Mammary epithelial cell (primary cell): ENCODE measurements at regions of chr7 and their contacts with region 1.

Region 1: DNA sequence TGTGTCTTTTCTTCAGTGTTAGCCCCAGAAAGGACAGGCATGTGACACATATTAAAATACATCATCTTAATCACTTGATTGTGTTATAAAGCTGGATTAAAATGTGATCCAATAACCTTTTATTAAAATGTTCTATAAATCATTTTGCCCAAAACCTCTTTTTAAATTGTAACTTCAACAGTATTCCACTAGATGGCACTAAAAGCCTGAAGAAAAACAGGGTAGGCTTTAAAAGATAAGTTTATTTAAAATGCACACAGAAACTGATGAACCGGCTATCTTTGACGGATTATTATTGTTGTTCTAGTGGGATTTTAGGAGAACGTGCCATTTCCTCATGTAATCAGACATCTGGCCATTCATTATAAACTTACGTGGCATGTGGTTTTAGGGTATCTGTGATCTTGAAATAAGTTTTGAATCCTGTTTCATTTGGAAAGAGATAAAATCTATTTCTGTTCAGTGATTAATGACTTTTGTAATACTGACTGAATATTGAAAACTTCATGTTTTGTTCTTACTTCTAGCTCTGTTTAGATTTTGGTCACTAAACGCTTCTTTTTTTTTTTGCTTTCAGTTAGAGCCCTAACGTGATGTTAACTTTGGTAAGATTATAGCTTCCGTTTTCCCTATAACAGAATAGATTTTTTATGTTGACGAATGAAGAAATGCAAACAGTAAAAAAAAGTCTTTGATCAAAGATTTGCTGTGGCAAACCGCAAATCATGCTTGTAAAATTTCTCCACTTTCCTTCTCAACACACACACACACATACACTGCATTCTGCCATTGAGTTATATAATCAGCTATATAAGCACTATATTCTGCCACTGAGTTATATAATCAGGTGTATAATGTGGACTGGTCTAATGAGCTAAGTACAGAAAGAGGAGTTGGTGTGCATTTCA is 13.6 kb downstream of the VPS50 start:
- DNase-seq: peak; percentile 6
- H3K4me3 ChIP-seq: no peak overlapping the region
- H3K27ac ChIP-seq: no peak overlapping the region
- H3K4me1 ChIP-seq: no peaks in the 10 kb centered on the region
- H3K27me3 ChIP-seq: no peaks in the 10 kb centered on the region
- CTCF ChIP-seq: peak; percentile 46 to 52

Region 2: GRCh38 chr7:93108003-93108402 is 137.8 kb before region 1 on chr7:
- CTCF ChIA-PET with region 1: no interaction called
- dilution Hi-C with region 1: no loop called
- in situ Hi-C with region 1: no loop called
- intact Hi-C with region 1: no loop called
- DNase-seq: no peak
- H3K4me3 ChIP-seq: no peak overlapping the region
- H3K27ac ChIP-seq: no peak overlapping the region
- H3K4me1 ChIP-seq: no peaks in the 10 kb centered on the region
- H3K27me3 ChIP-seq: no peaks in the 10 kb centered on the region
- CTCF ChIP-seq: no peak

Region 3: GRCh38 chr7:93156884-93157283 is 88.9 kb before region 1 on chr7:
- CTCF ChIA-PET with region 1: no interaction called
- dilution Hi-C with region 1: no loop called
- in situ Hi-C with region 1: no loop called
- intact Hi-C with region 1: no loop called
- DNase-seq: no peak
- H3K4me3 ChIP-seq: no peak overlapping the region
- H3K27ac ChIP-seq: no peak overlapping the region
- H3K4me1 ChIP-seq: no peaks in the 10 kb centered on the region
- H3K27me3 ChIP-seq: no peaks in the 10 kb centered on the region
- CTCF ChIP-seq: no peak

Region 4: DNA sequence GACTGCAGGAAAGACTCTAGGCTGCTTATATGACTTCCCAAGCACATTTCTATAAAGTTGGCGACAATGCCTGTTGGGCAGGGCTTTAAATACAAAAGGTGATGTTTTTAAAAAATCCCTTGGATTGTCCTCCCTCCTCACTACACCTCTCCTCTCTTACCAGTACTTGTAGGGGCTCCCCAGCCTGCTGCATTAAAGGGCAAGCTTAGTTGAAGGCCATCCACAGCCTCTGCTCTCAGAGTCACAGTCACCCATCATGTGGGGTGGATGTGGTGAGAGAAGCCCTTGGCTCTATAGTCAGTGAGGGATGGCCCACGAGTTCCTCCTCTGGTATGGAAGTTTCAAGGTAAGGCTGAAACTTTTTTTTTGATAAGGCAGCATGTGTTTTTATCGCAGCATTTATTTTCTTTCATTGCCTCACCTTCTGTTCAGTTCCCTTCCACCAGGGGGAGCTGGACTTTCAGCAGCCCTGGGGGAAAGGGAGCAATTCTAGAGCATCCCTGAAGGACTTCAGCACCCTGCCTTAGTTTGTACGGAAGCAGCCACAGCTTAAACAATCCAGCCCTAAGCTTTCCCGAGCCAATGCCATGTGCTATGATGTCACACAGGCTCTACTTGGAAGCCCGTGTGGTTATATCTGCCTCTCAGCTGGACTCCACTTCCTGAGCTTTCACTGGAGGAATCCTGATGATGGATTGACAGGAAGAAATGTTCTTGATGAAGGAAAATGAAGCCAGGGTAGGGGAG is 196.9 kb after region 1 on chr7:
- CTCF ChIA-PET with region 1: no interaction called
- dilution Hi-C with region 1: no loop called
- in situ Hi-C with region 1: no loop called
- intact Hi-C with region 1: loop called (anchors 10 kb)
- DNase-seq: peak; percentile 19
- H3K4me3 ChIP-seq: no peak overlapping the region
- H3K27ac ChIP-seq: no peak overlapping the region
- H3K4me1 ChIP-seq: no peaks in the 10 kb centered on the region
- H3K27me3 ChIP-seq: peaks cover 8% of the 10 kb centered on the region
- CTCF ChIP-seq: peak; percentile 82 to 86

Region 5: GRCh38 chr7:93544691-93545090 is 298.9 kb after region 1 on chr7:
- CTCF ChIA-PET with region 1: no interaction called
- dilution Hi-C with region 1: no loop called
- in situ Hi-C with region 1: loop called (anchors 10 kb)
- intact Hi-C with region 1: no loop called
- DNase-seq: no peak
- H3K4me3 ChIP-seq: no peak overlapping the region
- H3K27ac ChIP-seq: no peak overlapping the region
- H3K4me1 ChIP-seq: no peaks in the 10 kb centered on the region
- H3K27me3 ChIP-seq: peaks cover 4% of the 10 kb centered on the region
- CTCF ChIP-seq: no peak